OCI-LY7 (cell line): ENCODE measurements at regions of chr6 and their contacts with region 1.

Region 1: DNA sequence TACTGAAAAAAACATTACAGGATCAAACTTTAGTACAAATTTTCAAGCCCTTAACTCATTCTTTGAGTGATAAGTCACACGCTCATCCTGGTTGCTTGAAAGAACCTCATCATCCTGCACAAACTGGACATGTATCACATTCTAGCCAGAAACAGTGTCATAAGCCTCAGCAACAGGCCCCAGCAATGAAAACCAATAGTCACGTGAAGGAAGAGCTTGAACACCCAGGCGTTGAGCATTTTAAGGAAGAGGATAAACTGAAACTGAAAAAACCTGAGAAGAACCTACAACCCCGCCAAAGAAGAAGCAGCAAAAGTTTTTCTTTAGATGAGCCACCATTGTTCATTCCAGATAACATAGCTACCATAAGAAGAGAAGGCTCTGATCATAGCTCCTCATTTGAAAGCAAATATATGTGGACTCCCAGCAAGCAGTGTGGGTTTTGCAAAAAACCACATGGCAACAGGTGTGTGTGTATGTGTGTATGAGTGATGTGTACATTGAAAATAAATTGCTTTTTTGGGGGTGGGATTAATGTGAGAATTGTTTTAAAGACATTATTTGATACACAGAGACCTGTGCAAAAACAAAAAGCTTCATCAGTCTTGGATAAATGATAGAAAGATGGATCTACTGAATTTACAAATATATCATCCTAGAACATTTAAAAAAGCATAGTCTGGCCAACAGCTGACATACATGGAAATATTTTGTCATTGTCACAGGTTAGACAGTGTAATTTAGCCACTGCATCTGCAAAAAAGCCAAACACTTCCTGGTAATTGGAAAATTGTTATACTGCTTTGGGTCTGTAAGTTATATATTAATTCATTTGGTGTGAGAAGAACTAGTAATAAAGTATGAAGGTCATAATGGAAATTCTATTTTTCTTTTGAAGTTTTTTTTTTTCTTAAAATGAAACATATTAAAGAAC is 50.1 kb downstream of the PHF3 start:
- DNase-seq: peak; percentile 67
- H3K4me3 ChIP-seq: peak overlapping the region; percentile 39
- H3K27ac ChIP-seq: peak overlapping the region; percentile 93
- H3K4me1 ChIP-seq: peaks cover 77% of the 10 kb centered on the region
- CTCF ChIP-seq: no peak

Region 2: GRCh38 chr6:63403725-63404124 is 282.0 kb before region 1 on chr6:
- CTCF ChIA-PET with region 1: no interaction called
- POLR2A ChIA-PET with region 1: no interaction called
- intact Hi-C with region 1: no loop called
- DNase-seq: no peak
- H3K4me3 ChIP-seq: no peak overlapping the region
- H3K27ac ChIP-seq: no peak overlapping the region
- H3K4me1 ChIP-seq: no peaks in the 10 kb centered on the region
- CTCF ChIP-seq: no peak

Region 3: GRCh38 chr6:63492476-63492875 is 193.2 kb before region 1 on chr6:
- CTCF ChIA-PET with region 1: no interaction called
- POLR2A ChIA-PET with region 1: no interaction called
- intact Hi-C with region 1: no loop called
- DNase-seq: no peak
- H3K4me3 ChIP-seq: no peak overlapping the region
- H3K27ac ChIP-seq: no peak overlapping the region
- H3K4me1 ChIP-seq: no peaks in the 10 kb centered on the region
- CTCF ChIP-seq: no peak

Region 4: GRCh38 chr6:63571881-63572732 is 113.6 kb before region 1 on chr6 and contains the starts of genes LOC128125822 and PTP4A1:
- CTCF ChIA-PET with region 1: no interaction called
- POLR2A ChIA-PET with region 1: interaction called, 4 read pairs
- intact Hi-C with region 1: loop called (anchors 5 kb)
- DNase-seq: peak; percentile 99
- H3K4me3 ChIP-seq: peak within 1 kb of the TSS; percentile 85
- H3K27ac ChIP-seq: peak within 1 kb of the TSS; percentile 76
- H3K4me1 ChIP-seq: peaks cover 23% of the 10 kb centered on the region
- CTCF ChIP-seq: no peak
- total RNA-seq, gene PTP4A1: 20.9 and 21.2 TPM in 2 replicates

Region 5: GRCh38 chr6:63635588-63636517 is 49.9 kb before region 1 on chr6 and contains the start of gene PHF3:
- CTCF ChIA-PET with region 1: interaction called, 4 read pairs
- POLR2A ChIA-PET with region 1: interaction called, 15 read pairs
- intact Hi-C with region 1: loop called (anchors 1 kb)
- DNase-seq: peak; percentile 96
- H3K4me3 ChIP-seq: peak within 1 kb of the TSS; percentile 78
- H3K27ac ChIP-seq: peak within 1 kb of the TSS; percentile 77
- H3K4me1 ChIP-seq: peaks cover 48% of the 10 kb centered on the region
- CTCF ChIP-seq: peak; percentile 42
- total RNA-seq, gene PHF3: 54.0 and 54.8 TPM in 2 replicates

Region 6: DNA sequence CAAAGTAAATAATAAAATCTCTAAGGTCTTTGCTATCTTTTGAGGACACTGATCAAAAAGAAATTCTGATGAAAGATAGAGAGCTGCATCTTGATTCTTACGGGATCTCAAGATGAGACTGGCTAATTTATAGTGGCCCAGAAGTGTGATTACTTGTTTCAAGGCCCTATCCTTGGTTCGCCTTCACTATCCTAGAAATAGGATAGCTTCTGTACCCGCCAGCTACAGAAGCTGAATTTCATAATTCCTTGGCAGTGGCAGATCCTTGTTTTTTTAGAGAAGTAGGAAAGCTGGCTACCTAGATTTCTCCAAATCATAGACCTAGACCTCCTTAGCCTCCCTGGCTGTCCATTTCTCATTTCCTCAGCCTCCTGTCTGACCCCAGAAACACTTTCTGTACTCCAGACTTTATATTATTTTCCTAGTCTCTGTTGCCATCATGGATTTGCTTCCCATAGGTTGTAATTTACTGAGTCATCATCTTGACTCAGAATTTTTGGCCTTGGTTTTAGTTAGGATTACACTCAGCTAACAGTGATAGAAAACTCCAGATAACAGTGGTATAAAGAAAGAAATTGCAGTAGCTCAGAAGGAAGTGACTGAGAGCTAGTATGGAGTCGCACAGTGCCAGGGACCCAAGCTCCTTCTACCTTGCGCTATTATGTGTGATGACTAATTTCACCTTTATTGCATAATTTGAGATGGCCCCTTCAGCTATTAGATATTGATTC is 22.4 kb before region 1 on chr6:
- CTCF ChIA-PET with region 1: no interaction called
- POLR2A ChIA-PET with region 1: interaction called, 192 read pairs
- intact Hi-C with region 1: loop called (anchors 1 kb)
- DNase-seq: no peak
- H3K4me3 ChIP-seq: no peak overlapping the region
- H3K27ac ChIP-seq: peak overlapping the region; percentile 39
- H3K4me1 ChIP-seq: peaks cover 75% of the 10 kb centered on the region
- CTCF ChIP-seq: no peak

Region 7: GRCh38 chr6:63764318-63764916 is 78.7 kb after region 1 on chr6:
- CTCF ChIA-PET with region 1: interaction called, 3 read pairs
- POLR2A ChIA-PET with region 1: no interaction called
- intact Hi-C with region 1: loop called (anchors 2 kb)
- DNase-seq: peak; percentile 71
- H3K4me3 ChIP-seq: no peak overlapping the region
- H3K27ac ChIP-seq: no peak overlapping the region
- H3K4me1 ChIP-seq: no peaks in the 10 kb centered on the region
- CTCF ChIP-seq: peak; percentile 89